ENCODE measurements at regions of chr12 and their contacts with region 1.

Region 1: DNA sequence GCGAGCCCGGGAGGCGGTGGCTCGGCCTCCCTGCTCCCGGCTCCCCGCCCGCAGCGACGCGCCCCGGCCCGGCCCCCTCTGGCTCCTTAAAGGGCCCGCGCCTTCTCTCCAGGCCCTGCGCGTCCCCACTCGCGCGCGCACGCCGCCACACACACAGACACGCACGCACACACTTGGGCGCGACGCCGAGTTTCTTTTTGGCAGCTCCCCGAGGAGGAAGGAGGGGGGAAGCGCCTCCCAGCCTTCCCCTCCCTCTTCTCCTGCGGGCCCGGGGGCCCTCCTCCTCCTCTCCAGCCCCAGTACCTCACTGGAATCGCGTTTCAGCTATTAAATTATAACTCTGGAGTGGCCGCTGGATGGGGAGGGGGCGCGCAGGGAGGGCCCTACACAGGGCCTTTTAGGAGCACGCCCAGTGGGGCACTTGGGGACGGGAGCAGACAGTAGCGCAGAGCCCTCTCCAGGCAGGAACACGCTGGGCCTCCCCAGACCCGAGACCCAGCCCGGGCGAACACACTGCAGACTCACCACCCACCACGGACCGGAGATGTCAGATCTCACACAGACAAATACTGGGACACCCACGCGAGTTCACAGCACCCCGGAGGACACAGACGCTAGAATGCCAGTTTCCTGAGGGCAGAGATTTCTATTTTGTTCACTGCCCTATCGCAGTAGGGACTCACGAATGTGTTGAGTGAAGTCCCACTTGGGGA is 405 bp upstream of the NCOR2 start:
- DNase-seq: peak; percentile 97
- H3K4me3 ChIP-seq: peak overlapping the region; percentile 37
- H3K27ac ChIP-seq: peak overlapping the region; percentile 88
- H3K4me1 ChIP-seq: peaks cover 38% of the 10 kb centered on the region
- H3K27me3 ChIP-seq: no peaks in the 10 kb centered on the region
- CTCF ChIP-seq: no peak

Region 2: GRCh38 chr12:123757561-123757960 is 810.3 kb before region 1 on chr12:
- CTCF ChIA-PET with region 1: no interaction called
- POLR2A ChIA-PET with region 1: no interaction called
- intact Hi-C with region 1: no loop called
- DNase-seq: no peak
- H3K4me3 ChIP-seq: no peak overlapping the region
- H3K27ac ChIP-seq: no peak overlapping the region
- H3K4me1 ChIP-seq: no peaks in the 10 kb centered on the region
- H3K27me3 ChIP-seq: no peaks in the 10 kb centered on the region
- CTCF ChIP-seq: no peak

Region 3: DNA sequence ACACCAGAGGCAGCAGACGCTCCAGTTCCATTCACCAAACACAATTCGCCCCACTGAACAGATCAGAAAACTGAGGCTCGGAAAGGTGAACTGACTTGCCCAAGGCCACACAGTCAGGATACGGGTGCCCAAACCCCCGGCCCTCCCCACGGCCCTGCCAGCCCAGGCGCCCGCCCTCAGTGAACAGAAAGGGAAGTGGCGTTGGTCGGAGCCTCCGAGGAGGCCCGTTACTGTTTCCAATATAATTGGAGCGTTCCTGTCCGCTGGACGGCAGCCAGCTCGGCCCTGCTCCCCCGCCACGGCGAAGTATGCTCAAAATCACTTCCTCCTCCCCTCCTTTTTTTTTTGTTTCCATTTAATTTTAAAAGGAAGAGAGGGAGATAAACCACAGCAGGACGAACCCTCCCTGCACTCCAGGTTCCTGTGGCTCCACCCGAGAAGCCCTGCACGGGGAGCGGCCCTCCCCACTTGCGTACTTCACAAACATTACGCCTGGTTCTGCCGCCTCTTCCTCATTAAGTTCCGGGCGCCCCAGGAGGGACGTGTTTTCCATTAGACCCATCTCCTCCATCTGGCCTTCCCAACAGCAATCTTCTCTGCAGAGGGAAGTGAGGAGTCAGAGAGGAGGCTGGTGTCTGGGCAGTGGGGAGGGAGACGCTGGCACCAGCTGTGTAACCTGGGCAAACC is 61.5 kb before region 1 on chr12:
- CTCF ChIA-PET with region 1: interaction called, 5 read pairs
- POLR2A ChIA-PET with region 1: no interaction called
- intact Hi-C with region 1: loop called (anchors 2 kb)
- DNase-seq: peak; percentile 98
- H3K4me3 ChIP-seq: peak overlapping the region; percentile 20
- H3K27ac ChIP-seq: peak overlapping the region; percentile 88
- H3K4me1 ChIP-seq: peaks cover 71% of the 10 kb centered on the region
- H3K27me3 ChIP-seq: no peaks in the 10 kb centered on the region
- CTCF ChIP-seq: 0 out of 2 replicates have a peak, but pooled peaks have one; percentile 22

Region 4: GRCh38 chr12:124527861-124528561 is 39.8 kb before region 1 on chr12:
- CTCF ChIA-PET with region 1: no interaction called
- POLR2A ChIA-PET with region 1: no interaction called
- intact Hi-C with region 1: loop called (anchors 5 kb)
- DNase-seq: peak; percentile 98
- H3K4me3 ChIP-seq: peak overlapping the region; percentile 7
- H3K27ac ChIP-seq: peak overlapping the region; percentile 93
- H3K4me1 ChIP-seq: peaks cover 56% of the 10 kb centered on the region
- H3K27me3 ChIP-seq: no peaks in the 10 kb centered on the region
- CTCF ChIP-seq: 0 out of 2 replicates have a peak, but pooled peaks have one; percentile 24

Region 5: DNA sequence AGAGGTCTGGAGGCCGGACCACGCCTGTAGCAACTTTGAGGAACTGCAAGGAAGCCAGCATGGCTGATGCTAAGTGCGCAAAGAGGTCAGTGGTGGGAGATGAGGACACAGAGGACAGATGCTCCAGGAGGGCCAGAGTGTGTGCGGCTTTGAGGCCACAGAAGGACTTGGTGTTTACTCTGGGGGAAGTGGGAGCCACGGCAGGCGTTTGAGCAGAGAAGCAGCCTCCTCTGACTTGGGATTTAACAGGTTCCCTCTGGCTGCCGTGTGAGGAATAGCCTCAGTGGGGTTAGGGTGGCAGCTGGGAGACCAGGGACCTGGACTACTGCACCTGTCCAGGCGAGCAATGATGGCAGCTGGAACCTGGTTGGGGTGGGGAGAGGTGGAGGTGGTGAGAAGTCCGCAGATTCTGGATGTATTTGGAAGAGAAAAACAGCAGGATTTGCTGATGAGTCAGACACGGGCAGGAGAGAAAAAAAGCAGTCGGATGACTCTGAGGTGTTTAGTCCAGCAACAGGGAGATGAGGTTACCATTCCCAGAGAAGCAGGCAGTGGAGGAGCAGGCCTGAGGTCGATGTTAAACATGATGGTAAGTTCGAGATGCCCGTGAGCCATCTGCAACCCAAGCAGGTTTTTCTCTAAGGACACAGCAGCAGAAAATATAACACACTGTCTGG is 152.3 kb after region 1 on chr12:
- CTCF ChIA-PET with region 1: no interaction called
- POLR2A ChIA-PET with region 1: no interaction called
- intact Hi-C with region 1: loop called (anchors 5 kb)
- DNase-seq: no peak
- H3K4me3 ChIP-seq: no peak overlapping the region
- H3K27ac ChIP-seq: peak overlapping the region; percentile 64
- H3K4me1 ChIP-seq: peaks cover 44% of the 10 kb centered on the region
- H3K27me3 ChIP-seq: no peaks in the 10 kb centered on the region
- CTCF ChIP-seq: peak; percentile 42

Region 6: GRCh38 chr12:124754949-124755800 is 187.4 kb after region 1 on chr12:
- CTCF ChIA-PET with region 1: no interaction called
- POLR2A ChIA-PET with region 1: no interaction called
- intact Hi-C with region 1: loop called (anchors 5 kb)
- DNase-seq: peak; percentile 94
- H3K4me3 ChIP-seq: no peak overlapping the region
- H3K27ac ChIP-seq: peak overlapping the region; percentile 32
- H3K4me1 ChIP-seq: peaks cover 40% of the 10 kb centered on the region
- H3K27me3 ChIP-seq: no peaks in the 10 kb centered on the region
- CTCF ChIP-seq: no peak

Measured in A673 (cell line).